Endothelial cell of umbilical vein (primary cell): ENCODE measurements at regions of chr6 and their contacts with region 1.

Region 1: GRCh38 chr6:106214531-106214930 is 111.0 kb downstream of the ATG5 start:
- DNase-seq: no peak
- H3K4me3 ChIP-seq: no peak overlapping the region
- H3K27ac ChIP-seq: no peak overlapping the region
- H3K4me1 ChIP-seq: no peaks in the 10 kb centered on the region
- H3K27me3 ChIP-seq: no peaks in the 10 kb centered on the region
- CTCF ChIP-seq: no peak
- POLR2A ChIP-seq: no peak

Region 2: DNA sequence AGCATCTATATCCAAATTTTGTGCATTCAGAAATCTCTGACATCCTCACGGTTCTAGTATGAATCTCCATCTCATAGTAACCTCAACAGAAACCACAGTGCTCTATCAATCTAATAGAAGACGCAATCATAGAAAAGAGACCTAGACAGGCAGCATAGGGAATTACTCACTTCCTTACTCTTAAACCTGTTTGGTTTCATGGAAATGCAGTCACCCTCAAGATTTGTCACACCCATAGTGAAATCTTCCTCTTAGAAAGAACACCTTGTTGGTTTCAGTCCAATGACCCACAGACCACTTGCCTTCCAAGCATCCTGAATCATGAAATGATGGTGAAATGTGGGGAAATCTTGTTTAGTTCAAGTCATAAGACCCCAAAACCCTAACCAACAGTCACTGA is 294.5 kb before region 1 on chr6:
- CTCF ChIA-PET with region 1: no interaction called
- POLR2A ChIA-PET with region 1: no interaction called
- dilution Hi-C with region 1: no loop called
- intact Hi-C with region 1: no loop called
- DNase-seq: no peak
- H3K4me3 ChIP-seq: no peak overlapping the region
- H3K27ac ChIP-seq: no peak overlapping the region
- H3K4me1 ChIP-seq: no peaks in the 10 kb centered on the region
- H3K27me3 ChIP-seq: no peaks in the 10 kb centered on the region
- CTCF ChIP-seq: no peak
- POLR2A ChIP-seq: no peak

Region 3: GRCh38 chr6:106244521-106244920 is 30.0 kb after region 1 on chr6:
- CTCF ChIA-PET with region 1: no interaction called
- POLR2A ChIA-PET with region 1: no interaction called
- dilution Hi-C with region 1: no loop called
- intact Hi-C with region 1: loop called (anchors 2 kb)
- DNase-seq: no peak
- H3K4me3 ChIP-seq: no peak overlapping the region
- H3K27ac ChIP-seq: no peak overlapping the region
- H3K4me1 ChIP-seq: no peaks in the 10 kb centered on the region
- H3K27me3 ChIP-seq: no peaks in the 10 kb centered on the region
- CTCF ChIP-seq: no peak
- POLR2A ChIP-seq: no peak

Region 4: DNA sequence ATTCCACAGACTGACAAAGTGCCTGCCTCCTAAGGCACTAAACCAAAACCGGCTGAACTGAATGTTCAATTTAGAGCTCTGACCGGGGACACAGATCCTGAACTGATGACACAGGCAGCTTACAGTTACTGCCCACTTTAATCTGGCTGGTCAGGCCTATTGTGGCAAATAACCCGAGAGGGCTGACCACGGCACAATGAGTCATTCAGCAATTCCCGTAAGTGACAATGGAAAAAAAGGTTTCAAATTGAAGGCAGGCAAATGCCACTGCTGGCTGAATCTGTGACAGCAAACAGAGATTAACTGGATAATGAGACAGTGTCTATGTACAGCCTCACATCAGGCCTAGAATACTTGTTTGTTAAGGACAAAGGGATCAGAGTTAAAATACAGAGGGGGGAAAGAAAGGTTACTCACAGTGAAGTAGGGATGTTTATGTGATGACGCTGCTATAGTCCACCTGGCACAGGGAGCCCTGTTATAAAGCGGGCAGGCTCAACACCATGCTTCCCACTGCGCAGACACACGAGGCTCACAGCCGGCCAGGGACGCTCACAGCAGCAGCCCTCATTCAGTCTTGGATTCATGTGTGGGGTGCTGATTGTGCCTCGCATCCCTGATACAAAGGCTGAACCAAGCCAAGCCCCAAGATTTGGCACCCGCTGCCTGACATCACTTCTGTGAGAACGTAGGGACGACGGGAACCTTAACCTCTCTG is 360.4 kb after region 1 on chr6:
- CTCF ChIA-PET with region 1: no interaction called
- POLR2A ChIA-PET with region 1: no interaction called
- dilution Hi-C with region 1: no loop called
- intact Hi-C with region 1: no loop called
- DNase-seq: peak; percentile 61
- H3K4me3 ChIP-seq: no peak overlapping the region
- H3K27ac ChIP-seq: peak overlapping the region; percentile 28
- H3K4me1 ChIP-seq: peaks cover 9% of the 10 kb centered on the region
- H3K27me3 ChIP-seq: no peaks in the 10 kb centered on the region
- CTCF ChIP-seq: no peak
- POLR2A ChIP-seq: no peak